BJ (cell line): ENCODE measurements at regions of chr5 and their contacts with region 1.

Region 1: GRCh38 chr5:147576646-147577535 is 67.0 kb upstream of the DPYSL3 start:
- DNase-seq: no peak
- H3K4me3 ChIP-seq: no peak overlapping the region
- H3K27me3 ChIP-seq: no peaks in the 10 kb centered on the region
- CTCF ChIP-seq: peak; percentile 91

Region 2: GRCh38 chr5:147223948-147224791 is 352.7 kb before region 1 on chr5:
- CTCF ChIA-PET with region 1: interaction called, 20 read pairs
- POLR2A ChIA-PET with region 1: no interaction called
- DNase-seq: peak; percentile 3
- H3K4me3 ChIP-seq: no peak overlapping the region
- H3K27me3 ChIP-seq: no peaks in the 10 kb centered on the region
- CTCF ChIP-seq: peak; percentile 74

Region 3: GRCh38 chr5:147391781-147392180 is 185.1 kb before region 1 on chr5:
- CTCF ChIA-PET with region 1: interaction called, 12 read pairs
- POLR2A ChIA-PET with region 1: no interaction called
- DNase-seq: no peak
- H3K4me3 ChIP-seq: no peak overlapping the region
- H3K27me3 ChIP-seq: no peaks in the 10 kb centered on the region
- CTCF ChIP-seq: peak; percentile 63

Region 4: DNA sequence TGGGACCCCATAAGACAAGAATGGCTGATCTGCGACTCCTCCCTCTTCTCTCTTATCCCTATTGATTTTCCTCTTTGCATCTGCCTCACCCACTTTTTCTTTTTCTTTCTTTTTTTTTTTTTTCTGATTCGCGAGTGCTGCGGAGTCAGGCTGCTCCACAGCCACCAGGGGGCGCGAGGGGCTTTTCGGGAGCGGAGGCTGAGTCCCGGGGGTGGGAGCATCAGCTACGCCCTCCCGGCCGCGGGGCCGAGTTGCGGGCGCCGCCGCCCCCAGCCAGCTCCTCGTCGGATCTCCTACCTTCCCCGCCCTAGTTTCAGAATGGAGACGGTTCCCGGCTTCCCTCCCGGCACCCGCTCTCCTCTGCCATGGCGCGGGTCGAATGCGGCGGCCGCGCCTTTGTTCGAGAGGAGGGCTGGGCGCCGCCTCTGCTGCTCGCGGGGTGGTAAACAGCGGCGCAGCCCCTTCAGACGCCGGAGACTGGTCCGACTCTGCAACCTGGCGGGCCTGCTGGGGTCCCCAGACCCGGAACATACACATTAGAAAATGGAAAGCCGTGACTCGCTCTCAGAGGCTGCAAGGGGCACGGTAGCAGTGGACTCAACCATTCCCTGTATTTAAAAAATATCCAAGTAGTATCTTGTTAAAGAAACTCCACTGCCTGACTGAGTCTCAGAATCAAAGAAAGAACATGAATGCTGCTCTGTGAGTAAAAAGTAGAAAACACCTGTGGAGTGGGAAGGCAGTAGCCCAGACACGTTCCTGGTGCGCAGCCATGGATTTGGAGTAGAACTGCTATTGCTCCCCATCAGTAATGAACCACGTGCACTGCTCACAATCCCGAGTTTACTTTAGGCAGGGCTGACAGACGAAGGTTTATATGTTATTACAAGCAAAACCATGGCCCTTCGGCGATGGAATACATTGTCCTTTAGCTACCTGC is 122.7 kb before region 1 on chr5:
- CTCF ChIA-PET with region 1: interaction called, 40 read pairs
- POLR2A ChIA-PET with region 1: no interaction called
- DNase-seq: no peak
- H3K4me3 ChIP-seq: peak overlapping the region; percentile 89
- H3K27me3 ChIP-seq: peaks cover 2% of the 10 kb centered on the region
- CTCF ChIP-seq: peak; percentile 93

Region 5: DNA sequence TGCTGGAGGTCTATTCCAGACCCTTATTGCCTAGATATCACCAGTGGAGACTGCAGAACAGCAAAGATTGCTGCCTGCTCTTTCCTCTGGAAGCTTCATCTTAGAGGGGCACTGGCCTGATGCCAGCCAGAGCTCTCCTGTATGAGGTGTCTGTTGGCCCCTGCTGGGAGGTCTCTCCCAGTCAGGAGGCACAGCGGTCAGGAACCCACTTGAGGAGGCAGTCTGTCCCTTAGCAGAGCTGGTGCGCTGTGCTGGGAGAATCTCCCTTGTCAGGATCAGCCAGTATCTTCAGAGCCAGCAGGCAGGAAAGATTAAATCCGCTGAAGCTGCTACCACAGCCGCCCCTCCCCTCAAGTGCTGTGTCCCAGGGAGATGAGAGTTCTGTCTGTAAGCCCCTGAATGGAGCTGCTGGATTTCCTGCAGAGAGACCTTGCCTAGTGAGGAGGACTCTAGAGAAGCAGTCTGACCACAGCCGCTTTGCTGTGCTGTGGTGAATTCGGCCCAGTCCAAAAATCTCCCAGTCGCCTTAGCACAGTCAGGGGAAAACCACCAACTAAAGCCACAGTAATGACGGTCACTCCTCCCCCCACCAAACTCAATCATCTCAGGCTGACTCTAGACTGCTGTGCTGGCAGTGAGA is 81.5 kb after region 1 on chr5:
- CTCF ChIA-PET with region 1: no interaction called
- POLR2A ChIA-PET with region 1: no interaction called
- DNase-seq: no peak
- H3K4me3 ChIP-seq: no peak overlapping the region
- H3K27me3 ChIP-seq: no peaks in the 10 kb centered on the region
- CTCF ChIP-seq: no peak

Region 6: GRCh38 chr5:147712598-147712997 is 135.7 kb after region 1 on chr5:
- CTCF ChIA-PET with region 1: no interaction called
- POLR2A ChIA-PET with region 1: no interaction called
- DNase-seq: no peak
- H3K4me3 ChIP-seq: no peak overlapping the region
- H3K27me3 ChIP-seq: no peaks in the 10 kb centered on the region
- CTCF ChIP-seq: no peak